Transverse colon (tissue), 4 donors: ENCODE measurements at regions of chr2 and their contacts with region 1.

Region 1: GRCh38 chr2:188378371-188378950 is 86.8 kb downstream of the GULP1 start:
- DNase-seq: no peak
- H3K4me3 ChIP-seq: no peak overlapping the region
- H3K27ac ChIP-seq: no peak overlapping the region
- H3K4me1 ChIP-seq: peaks cover 0 to 13% (median 2%) of the 10 kb centered on the region in 4 donors
- H3K27me3 ChIP-seq: no peaks in the 10 kb centered on the region
- CTCF ChIP-seq: no peak
- EP300 ChIP-seq: no peak
- POLR2A ChIP-seq: no peak

Region 2: DNA sequence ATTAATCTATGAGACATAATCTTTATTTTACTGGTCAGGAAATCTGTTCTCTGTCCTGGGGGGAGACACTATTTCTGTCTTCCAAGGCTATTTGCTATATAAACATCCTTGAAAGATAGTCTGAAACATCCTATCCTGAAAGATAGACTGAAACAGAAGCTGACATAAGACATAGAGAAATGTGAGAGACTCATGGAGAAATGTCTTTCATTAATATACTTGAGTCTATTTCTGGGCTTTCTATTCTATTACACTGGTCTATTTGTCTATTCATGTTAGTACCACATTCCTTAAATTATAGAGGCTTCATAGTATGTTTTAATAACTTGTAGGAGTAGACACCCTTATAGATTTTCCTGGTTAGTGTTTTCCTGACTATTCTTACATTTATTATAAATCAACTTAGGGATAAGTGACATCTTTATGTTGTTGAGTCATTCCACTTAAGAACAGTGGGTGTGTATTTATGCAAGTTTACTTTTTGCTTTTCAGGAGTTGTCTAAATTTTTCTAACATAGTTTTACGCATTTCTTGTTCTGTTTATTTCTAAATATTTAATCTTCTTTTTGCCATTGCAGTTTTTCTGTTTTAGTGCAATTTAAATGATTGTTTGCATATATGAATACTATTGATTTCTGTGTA is 1284.6 kb before region 1 on chr2:
- in situ Hi-C with region 1: no loop called
- intact Hi-C with region 1: loop called (anchors 10 kb)
- DNase-seq: no peak
- H3K4me3 ChIP-seq: no peak overlapping the region
- H3K27ac ChIP-seq: no peak overlapping the region
- H3K4me1 ChIP-seq: no peaks in the 10 kb centered on the region
- H3K27me3 ChIP-seq: no peaks in the 10 kb centered on the region
- CTCF ChIP-seq: no peak
- EP300 ChIP-seq: no peak
- POLR2A ChIP-seq: no peak